Motor neuron (in vitro differentiated cells): ENCODE measurements at regions of chr12 and their contacts with region 1.

Region 1: DNA sequence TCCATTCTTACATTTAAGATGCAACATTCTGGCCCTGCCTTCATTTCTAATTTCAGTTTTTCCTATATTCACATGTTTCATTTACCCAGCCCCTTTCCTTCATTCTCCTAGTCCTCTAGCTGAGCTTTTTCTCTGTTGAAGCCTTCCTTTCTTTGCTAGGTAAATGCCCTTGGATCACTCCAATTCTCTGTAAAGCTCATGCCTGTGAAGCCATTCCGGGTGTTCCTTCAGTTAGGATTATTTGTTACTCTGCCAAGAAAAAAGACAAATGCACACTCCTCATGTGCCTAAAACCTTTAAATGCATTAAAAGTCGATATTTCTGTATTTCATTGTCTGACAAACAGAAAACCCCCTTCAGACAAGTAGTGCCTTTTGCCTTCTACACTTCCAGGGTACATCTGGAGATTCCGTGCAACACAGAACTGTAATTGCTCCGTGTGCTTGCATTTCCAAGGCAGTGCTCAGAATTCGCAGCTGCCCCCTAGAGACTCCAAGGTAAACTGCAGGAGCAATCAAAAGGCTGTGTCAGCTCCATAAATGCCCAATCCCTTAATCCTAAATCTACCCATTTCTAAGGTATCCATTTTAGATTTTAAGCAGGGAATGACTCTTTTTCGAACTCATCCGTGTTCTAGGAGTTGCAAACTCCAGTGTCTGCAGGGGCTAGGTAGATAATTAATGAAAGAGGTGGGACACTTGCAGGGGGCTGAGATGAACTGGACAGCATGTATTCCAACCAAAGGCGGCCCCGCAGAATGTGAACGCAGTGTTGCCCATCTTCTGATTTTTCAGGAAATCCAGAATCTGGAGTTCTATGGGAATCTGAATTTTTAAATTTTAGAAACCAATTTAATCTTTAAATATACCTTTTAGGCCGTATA is 320.2 kb downstream of the GRIN2B start:
- ATAC-seq: peak; percentile 81 to 98 (median 91)
- H3K4me3 ChIP-seq: no peak overlapping the region
- H3K27ac ChIP-seq: no peak overlapping the region
- H3K4me1 ChIP-seq: peaks cover 2 to 7% of the 10 kb centered on the region in 2 donors

Region 2: GRCh38 chr12:13255792-13256691 is 405.2 kb before region 1 on chr12:
- in situ Hi-C with region 1: loop called in 1 of 9 experiments (anchors 25 kb)
- ATAC-seq: peak; percentile 95 to 100 (median 98)
- H3K4me3 ChIP-seq: peak overlapping the region; percentile 8 to 33 (median 27)
- H3K27ac ChIP-seq: peak overlapping the region; percentile 40 to 58
- H3K4me1 ChIP-seq: peaks cover 17 to 29% of the 10 kb centered on the region in 2 donors

Region 3: GRCh38 chr12:13278249-13278787 is 382.9 kb before region 1 on chr12:
- in situ Hi-C with region 1: loop called in 2 of 9 experiments (anchors 25 kb)
- ATAC-seq: peak; percentile 89 to 98 (median 95)
- H3K4me3 ChIP-seq: no peak overlapping the region
- H3K27ac ChIP-seq: peak overlapping the region; percentile 21 to 31
- H3K4me1 ChIP-seq: peaks cover 37 to 38% of the 10 kb centered on the region in 2 donors